ENCODE measurements at regions of chr5 and their contacts with region 1.

Region 1: GRCh38 chr5:144405991-144406390 is 235.3 kb downstream of the KCTD16 start:
- DNase-seq: no peak
- H3K4me3 ChIP-seq: no peak overlapping the region
- H3K27ac ChIP-seq: no peak overlapping the region
- H3K4me1 ChIP-seq: no peaks in the 10 kb centered on the region
- H3K27me3 ChIP-seq: peaks cover 2% of the 10 kb centered on the region
- CTCF ChIP-seq: no peak

Region 2: DNA sequence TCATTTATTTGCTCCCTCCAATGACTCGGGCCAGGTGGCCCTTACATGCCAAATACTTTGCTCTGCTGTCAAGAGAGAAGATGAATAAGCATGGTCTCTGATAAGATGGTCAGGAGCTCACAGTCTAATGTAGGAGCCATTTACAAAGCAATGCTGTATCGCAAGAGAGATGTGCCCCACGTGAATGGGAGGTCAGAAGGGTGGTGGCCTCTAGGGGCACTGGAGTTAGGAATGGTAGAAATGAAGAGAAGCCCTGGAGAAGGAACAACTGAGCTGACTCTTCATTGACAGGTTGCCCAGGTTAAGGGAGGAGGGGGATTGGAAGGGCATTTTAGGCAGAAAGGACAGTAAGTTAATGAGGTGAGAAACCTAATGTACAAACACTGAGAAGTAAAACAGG is 51.2 kb after region 1 on chr5:
- CTCF ChIA-PET with region 1: no interaction called
- dilution Hi-C with region 1: loop called (anchors 5 kb)
- in situ Hi-C with region 1: no loop called
- intact Hi-C with region 1: no loop called
- DNase-seq: no peak
- H3K4me3 ChIP-seq: no peak overlapping the region
- H3K27ac ChIP-seq: no peak overlapping the region
- H3K4me1 ChIP-seq: no peaks in the 10 kb centered on the region
- H3K27me3 ChIP-seq: no peaks in the 10 kb centered on the region
- CTCF ChIP-seq: no peak

Measured in mammary epithelial cell (primary cell).